ENCODE measurements at regions of chr14 and their contacts with region 1.

Region 1: GRCh38 chr14:74362361-74362915 is 14.2 kb downstream of the VRTN start:
- DNase-seq: peak; percentile 80 to 90 (median 84)
- H3K4me3 ChIP-seq: no peak overlapping the region
- H3K27ac ChIP-seq: no peak overlapping the region
- H3K4me1 ChIP-seq: no peaks in the 10 kb centered on the region
- H3K27me3 ChIP-seq: no peaks in the 10 kb centered on the region
- CTCF ChIP-seq: peak; percentile 97

Region 2: GRCh38 chr14:73851644-73852382 is 510.6 kb before region 1 on chr14 and contains the start of gene PTGR2:
- intact Hi-C with region 1: no loop called
- DNase-seq: peak; percentile 98 to 99 (median 98)
- H3K4me3 ChIP-seq: peak within 1 kb of the TSS; percentile 81 to 96 (median 90)
- H3K27ac ChIP-seq: peak within 1 kb of the TSS; percentile 97 to 98
- H3K4me1 ChIP-seq: peaks cover 0 to 4% (median 2%) of the 10 kb centered on the region in 3 donors
- H3K27me3 ChIP-seq: no peaks in the 10 kb centered on the region
- CTCF ChIP-seq: no peak
- total RNA-seq, gene PTGR2: 20.5 TPM

Region 3: GRCh38 chr14:74478996-74479635 is 116.7 kb after region 1 on chr14:
- intact Hi-C with region 1: loop called (anchors 10 kb)
- DNase-seq: peak in 3 of 5 donors; percentile 37 to 69 (median 58)
- H3K4me3 ChIP-seq: no peak overlapping the region
- H3K27ac ChIP-seq: no peak overlapping the region
- H3K4me1 ChIP-seq: no peaks in the 10 kb centered on the region
- H3K27me3 ChIP-seq: no peaks in the 10 kb centered on the region
- CTCF ChIP-seq: peak; percentile 85

Measured in kidney (tissue), 22 donors.